ENCODE measurements at regions of chr11 and their contacts with region 1.

Region 1: GRCh38 chr11:128290106-128290840 is 297.1 kb downstream of the ETS1 start:
- DNase-seq: peak; percentile 79
- H3K4me3 Mint-ChIP-seq: peak overlapping the region; percentile 92
- H3K27ac Mint-ChIP-seq: peak overlapping the region; percentile 97
- H3K4me1 Mint-ChIP-seq: peaks cover 87% of the 10 kb centered on the region
- H3K27me3 Mint-ChIP-seq: no peaks in the 10 kb centered on the region

Region 2: DNA sequence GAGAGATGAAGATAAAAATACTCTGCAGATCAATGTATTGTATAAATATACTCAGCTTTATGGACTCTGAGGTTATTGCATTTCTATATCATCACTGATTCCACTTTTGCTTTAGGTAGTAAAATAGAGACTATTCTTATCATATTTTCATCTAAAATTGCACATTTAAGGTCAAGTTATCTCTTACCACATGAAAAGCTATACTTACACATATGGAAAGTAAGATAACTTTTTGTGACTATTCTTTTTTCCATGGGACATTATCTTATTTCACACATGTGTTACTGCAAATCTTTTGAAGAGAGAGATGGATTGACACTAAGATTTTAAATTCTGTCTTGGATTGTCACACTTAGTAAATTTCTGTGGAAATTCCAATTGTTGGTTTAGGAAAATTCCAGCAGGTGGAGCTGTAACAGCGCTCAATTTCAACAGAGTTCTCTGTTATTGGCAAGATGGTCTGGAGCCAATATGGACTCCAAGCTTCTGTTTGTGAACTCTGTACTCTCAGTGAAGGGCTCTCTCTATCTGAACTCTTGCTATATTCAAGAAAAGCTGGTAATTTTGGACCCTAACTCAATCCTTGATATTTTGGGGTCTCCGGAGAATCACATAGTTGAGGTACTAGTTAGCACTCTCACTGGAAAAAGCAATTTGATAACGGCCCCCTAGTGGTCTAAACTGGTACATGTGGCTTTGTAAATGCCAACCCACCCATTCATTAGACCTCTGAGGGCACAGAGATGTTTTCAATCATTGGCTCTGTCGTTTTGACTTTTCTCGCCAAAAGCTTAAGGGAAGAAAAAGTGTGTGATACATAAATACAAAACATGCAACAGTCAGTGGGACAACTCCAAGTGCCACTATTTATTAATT is 132.6 kb before region 1 on chr11:
- CTCF ChIA-PET with region 1: interaction called, 19 read pairs
- POLR2A ChIA-PET with region 1: interaction called, 3 read pairs
- DNase-seq: peak; percentile 52
- H3K4me3 Mint-ChIP-seq: peak overlapping the region; percentile 53
- H3K27ac Mint-ChIP-seq: peak overlapping the region; percentile 55
- H3K4me1 Mint-ChIP-seq: peaks cover 7% of the 10 kb centered on the region
- H3K27me3 Mint-ChIP-seq: peaks cover 8% of the 10 kb centered on the region

Region 3: GRCh38 chr11:128458321-128458720 is 168.0 kb after region 1 on chr11:
- CTCF ChIA-PET with region 1: interaction called, 27 read pairs
- POLR2A ChIA-PET with region 1: interaction called, 23 read pairs
- DNase-seq: no peak
- H3K4me3 Mint-ChIP-seq: no peak overlapping the region
- H3K27ac Mint-ChIP-seq: peak overlapping the region; percentile 7
- H3K4me1 Mint-ChIP-seq: peaks cover 67% of the 10 kb centered on the region
- H3K27me3 Mint-ChIP-seq: no peaks in the 10 kb centered on the region

Region 4: GRCh38 chr11:128482512-128483191 is 192.4 kb after region 1 on chr11:
- CTCF ChIA-PET with region 1: interaction called, 20 read pairs
- POLR2A ChIA-PET with region 1: interaction called, 125 read pairs
- DNase-seq: peak; percentile 59
- H3K4me3 Mint-ChIP-seq: peak overlapping the region; percentile 67
- H3K27ac Mint-ChIP-seq: peak overlapping the region; percentile 92
- H3K4me1 Mint-ChIP-seq: peaks cover 95% of the 10 kb centered on the region
- H3K27me3 Mint-ChIP-seq: no peaks in the 10 kb centered on the region

Region 5: DNA sequence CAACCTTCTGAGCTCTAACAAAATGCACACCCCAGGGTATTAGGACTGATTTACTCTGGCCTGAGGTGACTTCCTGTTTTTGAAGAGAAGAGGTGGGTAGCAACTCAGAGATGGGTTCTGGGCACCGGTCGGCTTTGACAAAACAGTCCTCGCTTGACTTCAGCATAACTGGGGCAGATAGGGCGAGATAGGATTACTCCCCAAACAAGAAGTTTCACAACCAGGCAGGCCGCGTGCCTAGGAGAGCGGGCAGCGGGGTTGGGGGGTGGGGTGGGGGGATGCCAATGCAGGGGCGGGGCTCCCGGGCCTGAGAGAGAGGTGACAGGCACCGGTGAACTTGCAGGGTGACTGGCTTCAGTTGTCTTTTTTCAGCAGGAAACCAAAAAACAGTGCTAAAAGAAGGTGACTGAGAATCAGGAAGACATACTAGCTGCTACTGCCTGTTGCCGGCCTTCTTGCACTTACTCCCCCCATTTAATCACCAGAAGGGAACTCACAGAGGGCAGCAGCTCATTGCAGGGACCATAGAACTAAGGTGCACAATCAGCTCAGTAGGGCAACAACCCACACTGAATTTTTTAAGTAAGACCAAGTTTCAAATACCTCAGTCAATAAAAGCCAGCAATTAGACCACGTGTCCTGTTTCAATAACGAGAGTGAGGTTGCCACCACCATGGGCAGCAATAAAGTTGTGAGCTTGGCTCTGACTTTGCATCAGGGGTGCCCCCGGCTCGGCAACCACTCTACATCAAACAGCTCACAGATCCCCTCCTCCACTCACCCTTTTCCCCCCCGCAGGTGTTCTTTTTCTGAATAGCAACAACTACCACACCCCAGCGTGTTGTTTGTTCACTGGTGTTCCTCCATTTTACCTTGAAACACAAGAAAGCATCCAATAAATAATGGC is 334.2 kb after region 1 on chr11:
- CTCF ChIA-PET with region 1: interaction called, 157 read pairs
- POLR2A ChIA-PET with region 1: interaction called, 118 read pairs
- DNase-seq: peak; percentile 75
- H3K4me3 Mint-ChIP-seq: peak overlapping the region; percentile 55
- H3K27ac Mint-ChIP-seq: peak overlapping the region; percentile 93
- H3K4me1 Mint-ChIP-seq: peaks cover 84% of the 10 kb centered on the region
- H3K27me3 Mint-ChIP-seq: no peaks in the 10 kb centered on the region

Measured in activated CD4-positive, alpha-beta memory T cell treated with anti-CD3 and anti-CD28 coated beads, Interleukin-2, amount 10 ng/mL, durations not matched to agents 7 days and 5 days (primary cell).